GM10248 (cell line): ENCODE measurements at regions of chr6 and their contacts with region 1.

Region 1: DNA sequence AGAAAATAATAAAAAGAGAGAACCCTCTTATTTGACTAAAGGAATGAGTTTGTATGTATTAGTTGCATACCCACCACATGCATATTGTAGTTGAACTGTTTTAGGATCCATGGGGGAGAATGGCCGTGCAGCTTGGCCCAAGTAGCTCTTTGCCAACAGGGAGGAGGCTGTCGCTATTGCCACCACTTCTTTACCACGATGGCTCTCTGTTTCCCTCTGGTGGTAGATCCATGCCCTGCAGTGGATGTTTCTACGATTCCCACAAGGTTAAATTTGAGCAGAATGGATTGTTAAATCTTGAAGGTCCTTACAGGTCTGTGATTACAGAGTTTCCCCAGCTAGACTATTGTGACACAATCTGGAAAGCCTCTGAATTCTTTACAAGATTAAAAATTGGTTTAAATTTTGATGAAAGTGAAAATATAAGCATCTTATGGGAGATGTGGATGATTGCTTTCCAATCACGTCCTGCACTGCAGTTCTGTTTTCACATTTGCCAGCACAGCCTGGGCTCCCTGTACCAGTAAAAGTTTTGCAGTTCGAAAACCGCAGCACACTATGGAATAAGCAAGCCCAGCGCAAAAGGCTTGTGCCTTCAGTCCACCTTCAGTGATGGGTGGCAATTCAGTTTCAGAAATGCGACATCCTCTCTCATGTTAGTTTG is 34.4 kb upstream of the FNDC1 start:
- DNase-seq: peak; percentile 78
- CTCF ChIP-seq: peak; percentile 98

Region 2: GRCh38 chr6:158999666-159000403 is 135.0 kb before region 1 on chr6 and contains the start of gene RSPH3:
- CTCF ChIA-PET with region 1: interaction called, 213 read pairs
- POLR2A ChIA-PET with region 1: no interaction called
- DNase-seq: peak; percentile 98
- CTCF ChIP-seq: peak; percentile 13

Region 3: GRCh38 chr6:159017757-159018559 is 116.9 kb before region 1 on chr6:
- CTCF ChIA-PET with region 1: interaction called, 16 read pairs
- POLR2A ChIA-PET with region 1: no interaction called
- DNase-seq: peak; percentile 45
- CTCF ChIP-seq: no peak

Region 4: GRCh38 chr6:159042003-159042825 is 92.6 kb before region 1 on chr6:
- CTCF ChIA-PET with region 1: interaction called, 20 read pairs
- POLR2A ChIA-PET with region 1: no interaction called
- DNase-seq: peak; percentile 62
- CTCF ChIP-seq: peak; percentile 98

Region 5: DNA sequence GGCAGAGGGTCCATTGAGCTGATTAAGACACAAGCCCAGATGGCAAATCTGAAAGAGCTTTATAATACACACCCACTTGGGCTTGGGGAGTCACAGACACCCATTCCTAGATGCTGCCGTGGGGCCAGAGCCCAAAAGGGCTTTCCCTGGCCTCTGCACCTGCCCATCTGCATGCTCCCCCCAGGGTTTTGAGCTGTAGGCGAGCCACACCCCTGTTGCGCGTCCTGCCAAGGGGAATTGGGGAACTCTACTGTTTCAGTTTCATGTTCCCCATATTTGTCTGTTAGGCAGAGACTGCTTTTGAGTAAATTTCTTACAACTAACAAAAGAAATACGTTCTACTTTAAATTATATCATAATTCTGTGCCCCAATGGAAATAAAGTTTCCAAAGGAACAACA is 18.5 kb before region 1 on chr6:
- CTCF ChIA-PET with region 1: interaction called, 112 read pairs
- POLR2A ChIA-PET with region 1: no interaction called
- DNase-seq: peak; percentile 50
- CTCF ChIP-seq: no peak